Activated T-helper 1 cell treated with anti-CD3 and anti-CD28 coated beads, Interleukin-12 subunit alpha, Interleukin-12 subunit beta, Interleukin-2, Interleukin-4 antibody, amounts not matched to agents 30 ng/mL and 10 ng/mL and 1 ng/mL, durations not matched to agents 14 hours and 24 hours and 36 hours (primary cell): ENCODE measurements at regions of chr5 and their contacts with region 1.

Region 1: GRCh38 chr5:143413958-143414669 is 10.6 kb upstream of the NR3C1 start:
- DNase-seq: no peak
- H3K4me3 Mint-ChIP-seq: no peak overlapping the region
- H3K27ac Mint-ChIP-seq: no peak overlapping the region
- H3K4me1 Mint-ChIP-seq: peaks cover 12% of the 10 kb centered on the region
- H3K27me3 Mint-ChIP-seq: peaks cover 5% of the 10 kb centered on the region

Region 2: DNA sequence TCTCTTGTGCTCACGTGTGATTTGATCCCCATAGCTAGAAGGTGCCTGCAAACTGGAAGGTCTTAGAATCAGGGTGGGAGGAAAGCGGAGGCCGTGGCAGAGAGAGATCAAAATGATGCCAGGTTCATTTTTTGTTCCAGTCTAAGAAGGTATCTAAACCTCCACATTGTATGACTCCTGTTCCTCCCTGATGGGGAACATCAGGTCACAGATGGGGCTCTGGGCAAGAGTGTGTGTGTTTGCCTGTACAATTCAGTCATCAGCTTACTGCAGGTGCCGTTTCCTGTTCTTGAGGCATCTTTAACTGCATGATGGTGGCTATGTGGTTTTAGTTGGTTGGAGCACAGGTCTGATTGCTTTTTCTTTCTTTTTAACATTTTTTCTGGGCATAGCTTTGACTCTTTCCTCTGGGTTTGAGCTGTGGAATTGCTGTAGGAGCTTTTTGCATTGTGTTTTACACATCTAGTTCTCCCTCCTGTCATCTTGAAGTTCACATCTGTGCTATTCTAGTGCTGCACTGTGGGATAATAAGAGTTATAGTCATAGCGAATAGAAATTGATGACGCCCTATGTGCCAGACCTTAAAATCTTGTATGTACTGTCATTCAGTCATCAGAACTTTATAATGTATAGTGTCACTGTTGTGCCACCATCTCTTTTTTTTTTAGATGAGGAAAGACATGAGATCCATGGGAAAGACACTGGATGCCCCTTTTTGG is 613.2 kb before region 1 on chr5:
- intact Hi-C with region 1: loop called (anchors 10 kb)
- DNase-seq: peak; percentile 53
- H3K4me3 Mint-ChIP-seq: peak overlapping the region; percentile 73
- H3K27ac Mint-ChIP-seq: peak overlapping the region; percentile 93
- H3K4me1 Mint-ChIP-seq: peaks cover 67% of the 10 kb centered on the region
- H3K27me3 Mint-ChIP-seq: no peaks in the 10 kb centered on the region

Region 3: GRCh38 chr5:143435210-143435657 is 21.1 kb after region 1 on chr5:
- intact Hi-C with region 1: loop called (anchors 2 kb)
- DNase-seq: no peak
- H3K4me3 Mint-ChIP-seq: peak overlapping the region; percentile 80
- H3K27ac Mint-ChIP-seq: peak overlapping the region; percentile 19
- H3K4me1 Mint-ChIP-seq: peaks cover 49% of the 10 kb centered on the region
- H3K27me3 Mint-ChIP-seq: peaks cover 14% of the 10 kb centered on the region

Region 4: GRCh38 chr5:143657647-143658285 is 243.7 kb after region 1 on chr5:
- intact Hi-C with region 1: no loop called
- DNase-seq: no peak
- H3K4me3 Mint-ChIP-seq: no peak overlapping the region
- H3K27ac Mint-ChIP-seq: no peak overlapping the region
- H3K4me1 Mint-ChIP-seq: peaks cover 8% of the 10 kb centered on the region
- H3K27me3 Mint-ChIP-seq: peaks cover 7% of the 10 kb centered on the region